Dorsolateral prefrontal cortex (tissue), 120 donors: ENCODE measurements at regions of chr12 and their contacts with region 1.

Region 1: DNA sequence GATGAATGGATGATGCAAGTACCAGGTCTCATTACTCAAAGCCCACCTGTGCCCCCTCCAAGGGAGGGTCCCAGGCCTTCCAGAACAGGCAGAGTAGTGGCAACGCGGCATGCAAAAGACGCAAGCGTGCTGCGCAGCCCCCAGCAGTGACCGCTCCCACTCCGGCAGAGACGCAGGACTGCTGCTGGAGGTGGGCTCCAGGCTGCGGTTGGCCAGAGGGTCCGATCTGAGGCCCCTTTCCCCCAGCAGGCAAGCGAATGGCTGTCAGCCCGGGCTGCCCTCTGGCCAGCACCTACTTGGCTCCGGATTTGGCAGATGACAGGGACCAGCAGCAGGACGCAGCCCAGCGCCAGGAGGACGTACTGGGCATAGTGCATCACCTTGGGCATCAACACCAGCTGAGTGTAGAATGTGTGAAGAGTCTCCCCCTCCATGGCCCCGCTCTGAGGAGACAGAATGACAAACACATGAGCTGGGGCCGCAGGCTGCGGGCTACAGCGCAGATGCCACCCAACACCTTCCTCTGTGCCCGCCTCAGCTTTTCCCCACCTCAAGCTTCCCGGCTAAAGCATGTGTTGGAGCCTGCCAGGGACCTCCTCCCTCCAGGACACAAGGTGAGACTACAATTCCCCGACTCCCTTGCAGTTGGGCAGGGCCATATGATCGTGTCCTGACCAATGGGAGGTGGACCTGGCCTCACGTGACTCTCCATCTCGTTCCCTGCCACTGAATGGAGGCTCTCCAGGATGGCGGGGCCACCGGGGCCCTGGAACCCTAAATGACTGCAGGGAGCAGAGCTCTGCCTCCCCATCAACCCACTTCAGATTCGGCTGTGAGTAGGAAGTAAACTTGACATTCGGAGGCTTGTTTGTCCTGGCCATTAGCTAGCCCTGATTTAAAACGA is 77.4 kb downstream of the SCARB1 start:
- DNase-seq: peak; percentile 83 to 96 (median 92)
- H3K4me3 ChIP-seq: peak overlapping the region in 57 of 59 donors; percentile 5 to 63 (median 40)
- H3K27ac ChIP-seq: peak overlapping the region in 21 of 59 donors; percentile 6 to 68 (median 41)
- H3K27me3 ChIP-seq: no peaks in the 10 kb centered on the region
- CTCF ChIP-seq: peak in 1 of 56 donors; percentile 20

Region 2: GRCh38 chr12:124673801-124674617 is 112.3 kb before region 1 on chr12:
- intact Hi-C with region 1: no loop called
- DNase-seq: peak; percentile 75 to 94 (median 89)
- H3K4me3 ChIP-seq: no peak overlapping the region
- H3K27ac ChIP-seq: peak overlapping the region; percentile 42 to 95 (median 88)
- H3K27me3 ChIP-seq: no peaks in the 10 kb centered on the region
- CTCF ChIP-seq: peak in 4 of 56 donors; percentile 11 to 23 (median 14)

Region 3: DNA sequence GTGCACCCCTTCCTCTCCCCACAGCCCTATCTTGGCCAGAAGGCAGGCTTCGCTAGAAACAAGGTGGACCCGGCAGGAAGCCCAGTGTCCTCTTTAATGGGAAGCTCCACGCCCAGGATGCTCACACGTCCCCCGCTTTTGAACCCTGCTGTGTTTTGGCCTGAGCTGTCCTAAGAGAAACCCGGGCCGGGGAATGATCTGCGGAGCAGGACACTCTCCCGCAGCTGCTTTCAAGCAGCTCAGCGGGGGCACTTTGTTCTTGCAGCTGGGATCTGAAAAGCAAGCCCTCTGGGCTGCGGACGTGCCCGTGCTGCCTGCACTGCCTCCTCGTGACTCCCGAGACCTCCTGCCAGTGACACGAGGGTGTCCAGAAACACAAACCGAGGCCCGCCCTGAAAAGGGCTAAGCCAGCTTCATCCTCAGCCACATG is 47.4 kb after region 1 on chr12:
- intact Hi-C with region 1: loop called in 1 of 2 experiments (anchors 5 kb)
- DNase-seq: peak in 2 of 10 donors; percentile 47
- H3K4me3 ChIP-seq: peak overlapping the region in 2 of 59 donors; percentile 11 to 25
- H3K27ac ChIP-seq: peak overlapping the region in 56 of 59 donors; percentile 3 to 90 (median 76)
- H3K27me3 ChIP-seq: no peaks in the 10 kb centered on the region
- CTCF ChIP-seq: peak in 1 of 56 donors; percentile 7

Region 4: DNA sequence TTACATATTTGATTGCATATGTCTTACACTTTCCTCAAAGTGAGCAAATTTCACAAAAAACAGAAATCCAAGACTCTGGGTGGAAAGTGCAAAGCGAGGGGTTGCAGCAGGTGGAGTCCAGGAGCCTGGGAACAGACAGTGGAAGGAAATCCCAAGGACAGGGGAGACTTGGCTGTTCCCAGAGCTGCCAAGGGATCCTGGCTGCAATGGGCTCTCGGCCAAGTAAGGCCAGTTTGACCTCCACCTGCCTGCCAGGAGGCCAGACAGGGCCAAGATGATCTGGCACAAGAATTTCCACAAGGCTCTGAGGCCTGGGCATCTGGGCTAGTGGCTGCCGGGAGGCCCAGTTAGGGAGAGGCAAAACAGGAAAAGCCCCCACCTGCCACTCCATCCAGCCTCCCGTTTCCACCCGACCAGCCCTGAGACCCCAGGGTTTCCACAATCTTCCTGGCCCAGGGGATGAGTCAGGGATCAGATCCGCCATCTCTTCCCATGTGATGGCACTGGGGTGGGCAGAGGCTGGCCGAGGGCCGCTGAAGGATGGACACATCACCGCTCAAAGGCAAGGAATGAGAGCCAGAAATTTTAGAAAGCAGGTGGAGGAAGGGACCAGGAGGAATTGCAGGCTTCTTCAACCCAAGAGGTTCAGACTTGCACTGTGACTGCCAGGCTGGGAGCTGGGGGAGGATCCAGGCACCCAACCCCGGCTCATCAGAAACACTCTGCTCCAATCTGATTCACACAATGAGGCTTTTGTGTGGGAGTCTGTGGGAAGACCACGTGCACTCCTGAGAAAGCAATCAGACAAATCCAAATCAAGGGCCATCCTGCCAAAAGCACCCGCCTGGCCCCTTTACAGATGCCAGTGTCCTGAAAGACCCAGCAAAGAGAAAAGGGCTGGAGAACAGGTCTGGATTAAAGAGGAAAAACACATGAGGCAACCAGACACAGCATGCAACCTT is 61.1 kb after region 1 on chr12:
- intact Hi-C with region 1: loop called (anchors 5 kb)
- DNase-seq: peak; percentile 64 to 94 (median 90)
- H3K4me3 ChIP-seq: peak overlapping the region in 34 of 59 donors; percentile 2 to 47 (median 22)
- H3K27ac ChIP-seq: peak overlapping the region; percentile 60 to 97 (median 90)
- H3K27me3 ChIP-seq: no peaks in the 10 kb centered on the region
- CTCF ChIP-seq: peak in 8 of 56 donors; percentile 6 to 24 (median 16)

Region 5: DNA sequence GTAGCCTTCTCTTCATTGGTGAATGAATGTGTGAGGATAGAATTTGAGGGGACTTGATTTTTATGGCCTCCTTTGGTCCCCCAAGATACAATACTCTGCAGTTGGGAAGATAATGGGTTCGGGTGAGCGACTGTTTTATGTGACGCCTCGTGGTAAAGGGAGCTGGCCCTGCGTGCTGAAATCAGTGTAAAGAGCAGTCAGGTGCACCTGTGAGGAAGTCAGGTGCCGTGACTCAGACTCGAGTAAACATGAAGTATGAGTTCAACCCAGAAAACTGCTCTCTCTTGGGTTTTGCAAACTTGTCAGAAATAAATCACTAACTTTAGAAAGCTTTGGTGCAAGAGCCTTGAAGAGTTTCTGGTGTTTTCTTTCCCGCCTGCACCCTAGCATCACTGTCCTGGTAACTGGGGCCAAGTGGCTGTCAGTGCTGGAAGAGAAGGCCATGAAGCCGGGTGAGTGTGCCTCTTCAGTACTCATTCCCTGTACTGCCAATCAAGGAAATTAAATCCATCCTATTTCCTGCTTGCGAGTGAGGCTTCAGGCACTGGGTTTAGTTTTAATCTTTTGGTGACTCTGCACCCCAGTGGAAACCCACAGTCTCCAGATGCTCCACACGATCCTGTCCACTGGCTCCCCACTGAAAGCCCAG is 338.1 kb after region 1 on chr12:
- intact Hi-C with region 1: no loop called
- DNase-seq: no peak
- H3K4me3 ChIP-seq: no peak overlapping the region
- H3K27ac ChIP-seq: no peak overlapping the region
- H3K27me3 ChIP-seq: no peaks in the 10 kb centered on the region
- CTCF ChIP-seq: no peak